ENCODE measurements at regions of chr4 and their contacts with region 1.

Region 1: GRCh38 chr4:2755837-2756694 is at the start of gene TNIP2:
- DNase-seq: peak; percentile 85 to 92 (median 89)
- ATAC-seq: peak; percentile 79
- H3K4me3 ChIP-seq: peak within 1 kb of the TSS; percentile 16 to 60
- H3K27ac ChIP-seq: peak within 1 kb of the TSS; percentile 70 to 94 (median 86)
- H3K4me1 ChIP-seq: peaks cover 39% of the 10 kb centered on the region
- H3K27me3 ChIP-seq: no peaks in the 10 kb centered on the region
- CTCF ChIP-seq: peak; percentile 23 to 79 (median 49)
- POLR2A ChIP-seq: peak; percentile 37 to 57 (median 46)
- total RNA-seq, gene TNIP2: 39.7 to 75.8 TPM

Region 2: GRCh38 chr4:1998293-1998692 is 757.8 kb before region 1 on chr4:
- intact Hi-C with region 1: no loop called
- DNase-seq: no peak
- ATAC-seq: no peak
- H3K4me3 ChIP-seq: no peak overlapping the region
- H3K27ac ChIP-seq: peak overlapping the region in 2 of 4 donors; percentile 49 to 55
- H3K4me1 ChIP-seq: peaks cover 17% of the 10 kb centered on the region
- H3K27me3 ChIP-seq: no peaks in the 10 kb centered on the region
- CTCF ChIP-seq: no peak
- POLR2A ChIP-seq: no peak

Region 3: DNA sequence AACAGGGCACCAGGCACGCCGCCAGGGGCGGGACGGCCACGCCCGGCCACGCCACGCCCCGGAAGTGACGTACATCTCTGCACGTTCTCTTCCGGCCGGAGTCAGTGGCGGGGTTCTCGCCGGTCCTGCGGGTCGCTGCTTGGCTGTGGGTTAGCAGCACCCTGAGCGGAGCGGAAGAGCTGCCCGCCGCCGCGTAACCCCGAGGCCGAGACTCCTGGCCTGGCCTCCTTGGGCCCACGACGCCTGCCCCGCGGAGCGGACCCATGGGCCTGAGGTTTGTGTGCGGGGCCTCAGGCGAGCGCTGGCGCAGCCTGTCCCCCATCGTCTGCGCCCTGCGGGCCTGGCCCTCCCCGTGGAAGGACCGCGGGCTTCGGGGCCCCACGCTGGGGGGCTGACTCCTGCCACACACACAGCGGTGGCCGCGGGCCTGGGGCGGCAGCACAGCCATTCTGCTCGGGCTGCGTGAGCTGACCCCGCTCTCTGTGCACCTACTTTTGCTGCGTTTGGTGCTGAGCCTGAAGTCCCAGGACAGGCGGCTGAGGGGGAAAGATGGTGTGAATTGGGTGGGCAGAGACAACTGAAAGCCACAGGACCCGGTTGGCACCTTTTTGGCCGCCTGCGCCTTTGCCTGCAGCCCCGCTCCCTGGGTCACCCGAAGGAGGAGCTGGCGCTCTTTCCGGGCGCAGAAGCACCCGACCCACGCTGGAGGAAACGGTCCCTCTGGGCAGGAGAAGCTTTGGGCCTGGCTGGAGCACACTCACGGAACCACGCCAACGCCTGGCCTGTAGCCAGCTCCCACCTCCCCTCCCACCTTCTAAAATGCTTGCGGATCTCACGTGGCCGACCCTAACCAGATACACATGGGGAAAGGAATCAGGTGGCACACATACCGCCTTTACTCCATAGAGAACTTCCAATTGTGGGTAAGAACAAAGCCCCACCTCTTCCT is 179.0 kb after region 1 on chr4:
- intact Hi-C with region 1: loop called (anchors 5 kb)
- DNase-seq: peak; percentile 96 to 99 (median 98)
- ATAC-seq: peak; percentile 85
- H3K4me3 ChIP-seq: peak overlapping the region; percentile 87
- H3K27ac ChIP-seq: peak overlapping the region; percentile 72 to 92 (median 83)
- H3K4me1 ChIP-seq: peaks cover 57% of the 10 kb centered on the region
- H3K27me3 ChIP-seq: no peaks in the 10 kb centered on the region
- CTCF ChIP-seq: peak in 3 of 7 experiments; percentile 11 to 51 (median 50)
- POLR2A ChIP-seq: peak; percentile 81 to 91 (median 84)